ENCODE measurements at regions of chrX and their contacts with region 1.

Region 1: GRCh38 chrX:49922291-49923241 is at the start of gene CLCN5:
- DNase-seq: peak; percentile 99
- total RNA-seq, gene CLCN5: 7.9 to 8.4 TPM

Region 2: GRCh38 chrX:48683411-48683982 is 1239.1 kb before region 1 on chrX and contains the start of gene WAS:
- intact Hi-C with region 1: no loop called
- DNase-seq: peak; percentile 76
- total RNA-seq, gene WAS: 7.3 to 12.2 TPM

Region 3: DNA sequence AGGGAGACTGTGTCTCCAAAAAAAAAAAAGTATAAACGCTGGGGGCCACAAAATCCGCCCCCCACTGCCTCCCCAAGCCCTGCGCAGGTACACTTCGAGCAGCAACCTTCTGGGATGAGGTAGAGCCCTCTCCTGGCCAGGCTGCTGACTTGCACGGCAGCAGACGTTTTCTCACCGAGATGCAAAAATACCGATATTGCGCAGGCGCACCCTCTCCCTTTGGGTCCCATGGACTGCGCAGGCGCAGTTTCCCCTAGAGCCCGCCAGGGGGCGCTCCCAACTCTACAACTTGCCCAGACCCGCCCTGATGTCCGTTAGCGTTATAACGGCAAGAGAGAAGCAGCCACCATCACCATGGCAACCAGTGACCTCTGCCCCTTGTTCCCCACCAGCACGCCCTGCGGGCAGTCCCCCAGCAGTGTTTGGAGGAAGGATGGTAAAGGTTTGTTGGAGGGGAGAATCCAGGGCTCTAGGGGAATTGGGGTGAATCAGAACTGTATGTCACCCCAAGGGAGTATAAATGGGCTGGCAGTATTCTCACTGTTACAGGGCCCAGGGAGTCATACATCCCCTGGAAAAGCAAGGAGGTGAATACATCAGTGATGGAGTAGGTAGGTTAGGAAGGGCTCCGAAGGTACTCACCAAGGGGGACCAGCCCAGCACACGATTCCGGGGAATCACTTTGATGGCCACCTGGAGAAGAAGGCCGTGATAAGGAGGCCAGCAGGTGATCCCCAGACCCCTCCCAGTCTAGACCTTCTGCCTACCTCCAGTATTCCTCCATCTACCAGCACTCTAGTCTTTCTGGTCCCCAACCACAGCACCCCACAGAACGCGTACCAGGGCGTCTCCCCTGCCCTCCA is 1005.2 kb before region 1 on chrX:
- intact Hi-C with region 1: no loop called
- DNase-seq: peak; percentile 96

Region 4: DNA sequence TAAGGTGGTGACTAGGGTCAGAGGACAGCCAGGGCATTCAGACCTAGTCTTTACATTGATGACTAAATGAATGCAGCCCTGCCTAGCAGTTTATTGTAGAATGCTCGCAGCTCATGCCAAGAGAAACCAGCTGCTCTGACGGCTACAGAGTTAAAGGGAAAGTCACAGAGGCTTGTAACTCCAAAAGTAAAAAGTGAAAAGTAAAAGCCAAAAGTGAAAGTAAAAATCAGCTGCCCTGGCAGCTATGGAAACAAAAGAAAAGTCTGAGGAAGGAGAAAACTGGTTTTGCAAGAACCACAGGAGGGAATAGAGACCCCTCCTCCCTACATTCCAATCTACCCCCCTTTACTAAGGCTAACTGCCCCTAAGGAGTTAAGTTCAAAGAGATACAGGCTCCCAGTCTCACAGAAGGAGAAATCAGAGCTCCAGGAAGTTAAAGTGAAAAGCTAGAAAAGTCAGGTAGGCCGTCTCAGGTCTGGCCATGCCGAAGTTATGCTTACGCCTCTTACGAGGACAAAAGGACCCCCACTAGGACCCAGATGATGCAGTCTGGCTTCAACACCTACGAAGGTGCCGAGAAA is 613.1 kb before region 1 on chrX:
- intact Hi-C with region 1: loop called in 1 of 2 experiments (anchors 5 kb)
- DNase-seq: no peak